Panc1 (cell line): ENCODE measurements at regions of chr17 and their contacts with region 1.

Region 1: GRCh38 chr17:47615766-47616424 is 33.8 kb upstream of the KPNB1 start:
- DNase-seq: no peak
- ATAC-seq: peak; percentile 63; the same call in 1 of the 2 replicates
- H3K4me3 ChIP-seq: no peak overlapping the region
- H3K27ac ChIP-seq: no peak overlapping the region
- H3K4me1 ChIP-seq: peaks cover 11% of the 10 kb centered on the region; the same call in 1 of the 2 replicates
- H3K27me3 ChIP-seq: no peaks in the 10 kb centered on the region
- CTCF ChIP-seq: peak; percentile 79

Region 2: GRCh38 chr17:47368262-47368661 is 247.6 kb before region 1 on chr17:
- CTCF ChIA-PET with region 1: no interaction called
- POLR2A ChIA-PET with region 1: no interaction called
- in situ Hi-C with region 1: no loop called
- intact Hi-C with region 1: loop called (anchors 10 kb)
- DNase-seq: no peak
- ATAC-seq: no peak
- H3K4me3 ChIP-seq: no peak overlapping the region
- H3K27ac ChIP-seq: no peak overlapping the region
- H3K4me1 ChIP-seq: no peaks in the 10 kb centered on the region
- H3K27me3 ChIP-seq: no peaks in the 10 kb centered on the region
- CTCF ChIP-seq: no peak

Region 3: DNA sequence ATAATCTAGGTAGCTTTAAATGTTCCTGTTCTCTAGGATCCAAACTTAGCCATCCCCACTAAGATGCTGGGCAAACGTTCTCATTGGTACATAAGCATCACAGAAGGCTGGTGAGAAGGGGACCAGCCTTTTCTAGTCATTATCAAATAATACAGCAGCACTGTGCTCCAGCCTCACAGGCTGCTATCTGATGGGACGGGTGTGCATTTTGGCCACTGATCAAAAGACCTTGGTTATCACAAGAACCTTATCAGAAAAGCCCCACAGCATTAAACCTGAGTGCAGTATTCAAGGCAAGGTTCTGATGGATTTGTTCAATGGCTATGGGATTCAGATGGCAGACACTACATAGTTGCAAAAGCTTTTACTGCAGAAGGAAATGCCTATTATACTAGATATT is 14.7 kb after region 1 on chr17:
- CTCF ChIA-PET with region 1: interaction called, 11 read pairs
- POLR2A ChIA-PET with region 1: no interaction called
- in situ Hi-C with region 1: no loop called
- intact Hi-C with region 1: no loop called
- DNase-seq: no peak
- ATAC-seq: no peak
- H3K4me3 ChIP-seq: no peak overlapping the region
- H3K27ac ChIP-seq: no peak overlapping the region
- H3K4me1 ChIP-seq: no peaks in the 10 kb centered on the region
- H3K27me3 ChIP-seq: no peaks in the 10 kb centered on the region
- CTCF ChIP-seq: no peak

Region 4: DNA sequence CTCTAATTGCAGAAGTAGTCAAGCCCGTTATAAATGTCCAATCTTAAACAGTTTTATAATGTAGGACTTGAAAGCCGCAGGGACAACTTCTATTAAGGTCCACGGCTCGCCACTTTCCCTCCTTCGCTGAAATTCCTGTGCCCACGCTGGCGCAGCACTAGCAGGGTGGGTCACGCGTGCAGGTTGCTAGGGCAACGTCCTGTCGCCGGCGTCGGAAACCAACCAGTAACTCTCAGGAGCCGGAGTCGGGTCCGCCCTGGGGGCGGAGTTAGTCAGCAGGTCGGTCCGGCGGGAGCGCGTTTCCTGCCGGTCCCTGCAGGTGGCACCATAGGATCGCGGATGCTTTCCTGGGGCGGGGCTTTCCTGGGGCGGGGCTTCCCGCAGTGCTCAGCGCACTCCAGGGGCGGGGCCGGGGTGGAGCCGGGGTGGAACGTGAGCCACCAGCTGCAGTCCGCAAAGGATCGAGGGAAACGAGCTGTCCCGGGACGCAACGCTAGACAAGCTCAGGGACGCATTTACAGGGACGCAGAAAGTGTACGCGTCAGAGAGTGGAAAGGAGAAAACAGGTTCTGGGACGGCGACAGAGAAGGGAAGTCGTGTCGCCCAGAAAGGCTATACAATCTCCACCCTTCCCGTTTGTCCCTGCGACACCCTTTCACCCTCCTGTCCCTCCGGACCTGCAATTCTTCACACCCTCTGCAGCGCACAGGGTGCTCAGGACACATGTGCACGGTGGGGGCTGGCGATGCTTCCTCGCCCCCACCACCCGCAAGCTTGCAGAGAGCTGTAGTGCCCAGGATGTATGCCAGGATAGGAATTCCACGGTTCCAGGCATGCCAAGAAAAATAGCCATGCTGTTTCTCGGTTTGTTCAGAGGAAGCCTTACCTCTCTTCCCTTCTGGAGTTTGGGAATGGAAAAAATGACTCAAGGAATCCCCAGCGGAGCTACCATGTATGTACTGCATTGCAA is 409.3 kb after region 1 on chr17:
- CTCF ChIA-PET with region 1: no interaction called
- POLR2A ChIA-PET with region 1: no interaction called
- in situ Hi-C with region 1: no loop called
- intact Hi-C with region 1: no loop called
- DNase-seq: peak; percentile 82
- ATAC-seq: peak; percentile 88
- H3K4me3 ChIP-seq: peak overlapping the region; percentile 61 to 93
- H3K27ac ChIP-seq: peak overlapping the region; percentile 76
- H3K4me1 ChIP-seq: peaks cover 27% of the 10 kb centered on the region
- H3K27me3 ChIP-seq: no peaks in the 10 kb centered on the region
- CTCF ChIP-seq: peak; percentile 94